ENCODE measurements at regions of chr17 and their contacts with region 1.

Region 1: GRCh38 chr17:60435244-60436167 is 13.2 kb downstream of the CHCT1 start:
- DNase-seq: peak; percentile 71 to 89 (median 89)
- ATAC-seq: peak; percentile 91 to 95
- H3K4me3 ChIP-seq: no peak overlapping the region
- H3K27ac ChIP-seq: no peak overlapping the region
- H3K4me1 ChIP-seq: no peaks in the 10 kb centered on the region
- H3K27me3 ChIP-seq: no peaks in the 10 kb centered on the region

Region 2: GRCh38 chr17:60102632-60103096 is 332.8 kb before region 1 on chr17:
- intact Hi-C with region 1: loop called in 1 of 4 experiments (anchors 10 kb)
- DNase-seq: peak in 2 of 3 donors; percentile 69
- ATAC-seq: peak; percentile 64 to 82
- H3K4me3 ChIP-seq: peak overlapping the region; percentile 40
- H3K27ac ChIP-seq: no peak overlapping the region
- H3K4me1 ChIP-seq: peaks cover 2% of the 10 kb centered on the region
- H3K27me3 ChIP-seq: no peaks in the 10 kb centered on the region

Region 3: GRCh38 chr17:60142872-60143499 is 292.5 kb before region 1 on chr17:
- intact Hi-C with region 1: loop called in 2 of 4 experiments (anchors 10 kb)
- DNase-seq: peak; percentile 86 to 94 (median 88)
- ATAC-seq: peak; percentile 76 to 77
- H3K4me3 ChIP-seq: no peak overlapping the region
- H3K27ac ChIP-seq: no peak overlapping the region
- H3K4me1 ChIP-seq: peaks cover 2% of the 10 kb centered on the region
- H3K27me3 ChIP-seq: no peaks in the 10 kb centered on the region

Region 4: DNA sequence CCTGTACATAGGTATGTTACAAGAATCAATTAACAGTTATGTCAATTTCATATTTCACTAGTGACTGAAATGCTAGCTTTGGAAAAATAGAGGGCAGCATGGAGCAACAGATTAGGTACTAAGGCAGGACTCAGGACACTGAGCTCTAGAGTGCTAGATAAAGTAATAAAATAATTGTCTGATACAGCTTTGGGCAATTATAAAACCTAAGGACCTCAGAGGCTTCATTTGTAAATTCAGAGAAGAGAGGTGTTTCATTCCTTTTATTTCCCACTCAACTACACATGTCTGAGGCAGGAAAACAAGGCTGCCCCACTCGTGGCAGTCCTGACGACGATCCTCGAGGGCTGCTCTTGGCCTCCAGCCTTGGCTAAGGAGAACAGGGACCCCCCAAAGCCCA is 204.3 kb before region 1 on chr17:
- intact Hi-C with region 1: loop called in 3 of 4 experiments (anchors 5 to 10 kb)
- DNase-seq: no peak
- ATAC-seq: no peak
- H3K4me3 ChIP-seq: no peak overlapping the region
- H3K27ac ChIP-seq: no peak overlapping the region
- H3K4me1 ChIP-seq: no peaks in the 10 kb centered on the region
- H3K27me3 ChIP-seq: no peaks in the 10 kb centered on the region

Region 5: GRCh38 chr17:60372790-60373483 is 62.6 kb before region 1 on chr17:
- intact Hi-C with region 1: no loop called
- DNase-seq: no peak
- ATAC-seq: no peak
- H3K4me3 ChIP-seq: no peak overlapping the region
- H3K27ac ChIP-seq: no peak overlapping the region
- H3K4me1 ChIP-seq: peaks cover 3% of the 10 kb centered on the region
- H3K27me3 ChIP-seq: no peaks in the 10 kb centered on the region

Measured in right cardiac atrium (tissue), 5 donors.